ENCODE measurements at regions of chr4 and their contacts with region 1.

Region 1: GRCh38 chr4:78517050-78517652 is 34.4 kb upstream of the ANXA3 start:
- DNase-seq: no peak
- H3K4me3 ChIP-seq: no peak overlapping the region
- H3K27ac ChIP-seq: no peak overlapping the region
- H3K4me1 ChIP-seq: no peaks in the 10 kb centered on the region
- H3K27me3 ChIP-seq: no peaks in the 10 kb centered on the region
- CTCF ChIP-seq: peak; percentile 69

Region 2: GRCh38 chr4:77959566-77960338 is 557.4 kb before region 1 on chr4:
- CTCF ChIA-PET with region 1: no interaction called
- POLR2A ChIA-PET with region 1: no interaction called
- intact Hi-C with region 1: loop called (anchors 1 kb)
- DNase-seq: no peak
- H3K4me3 ChIP-seq: no peak overlapping the region
- H3K27ac ChIP-seq: no peak overlapping the region
- H3K4me1 ChIP-seq: no peaks in the 10 kb centered on the region
- H3K27me3 ChIP-seq: no peaks in the 10 kb centered on the region
- CTCF ChIP-seq: peak; percentile 76

Region 3: DNA sequence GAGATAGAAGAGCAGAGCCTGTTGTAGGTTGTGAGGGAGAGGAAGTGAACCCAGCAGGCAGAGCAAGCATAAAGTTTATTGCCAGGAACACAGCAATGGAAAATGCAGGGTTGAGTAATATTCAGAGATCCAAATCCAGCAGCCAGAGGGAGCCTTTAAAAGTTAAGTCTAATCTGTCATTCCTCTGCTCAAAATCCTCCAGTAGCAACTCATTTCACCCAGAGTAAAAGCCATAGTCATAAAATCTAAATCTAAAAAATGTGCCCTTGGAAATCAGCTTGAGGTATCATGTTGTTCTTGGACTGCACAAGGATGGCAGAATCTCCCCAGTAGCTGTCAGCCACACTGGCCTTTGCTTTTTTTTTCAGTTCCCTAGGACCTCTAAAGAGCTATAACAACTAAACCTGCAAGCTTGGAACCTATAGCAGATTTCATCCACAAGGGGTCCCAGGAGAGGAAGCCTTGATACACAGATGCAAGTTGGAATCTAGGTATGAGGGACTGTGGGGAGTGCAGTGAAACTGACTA is 522.9 kb before region 1 on chr4:
- CTCF ChIA-PET with region 1: no interaction called
- POLR2A ChIA-PET with region 1: no interaction called
- intact Hi-C with region 1: loop called (anchors 1 kb)
- DNase-seq: peak in 1 of 2 experiments; percentile 16
- H3K4me3 ChIP-seq: no peak overlapping the region
- H3K27ac ChIP-seq: no peak overlapping the region
- H3K4me1 ChIP-seq: no peaks in the 10 kb centered on the region
- H3K27me3 ChIP-seq: no peaks in the 10 kb centered on the region
- CTCF ChIP-seq: peak; percentile 66

Region 4: DNA sequence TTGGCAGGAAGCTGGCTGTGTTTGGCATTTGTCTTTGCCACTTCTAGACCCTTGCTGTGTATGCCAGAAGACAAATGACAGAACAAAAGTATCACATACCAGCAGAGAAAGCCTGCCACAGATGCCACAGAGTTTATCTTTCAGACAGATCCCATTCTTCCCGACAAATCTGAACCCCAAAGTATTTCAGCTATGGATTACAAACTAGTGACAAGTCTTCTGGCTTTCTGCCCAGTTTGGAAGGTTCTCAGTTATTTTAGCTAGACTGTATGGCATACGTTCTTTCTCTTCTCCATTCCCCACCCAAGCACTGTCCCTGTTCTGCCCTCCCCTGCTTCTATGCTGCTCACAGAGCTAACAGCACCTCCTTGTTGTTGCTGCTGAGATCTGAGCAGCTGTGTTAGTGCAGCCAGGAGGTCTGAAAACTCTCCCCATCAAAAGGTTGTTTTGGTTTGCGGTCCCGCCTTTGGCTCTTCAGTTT is 223.3 kb before region 1 on chr4:
- CTCF ChIA-PET with region 1: interaction called, 7 read pairs
- POLR2A ChIA-PET with region 1: no interaction called
- intact Hi-C with region 1: loop called (anchors 5 kb)
- DNase-seq: peak; percentile 63 to 67
- H3K4me3 ChIP-seq: no peak overlapping the region
- H3K27ac ChIP-seq: peak overlapping the region; percentile 58
- H3K4me1 ChIP-seq: peaks cover 30% of the 10 kb centered on the region
- H3K27me3 ChIP-seq: no peaks in the 10 kb centered on the region
- CTCF ChIP-seq: no peak

Region 5: GRCh38 chr4:78481180-78481579 is 36.0 kb before region 1 on chr4:
- CTCF ChIA-PET with region 1: no interaction called
- POLR2A ChIA-PET with region 1: no interaction called
- intact Hi-C with region 1: no loop called
- DNase-seq: no peak
- H3K4me3 ChIP-seq: no peak overlapping the region
- H3K27ac ChIP-seq: no peak overlapping the region
- H3K4me1 ChIP-seq: no peaks in the 10 kb centered on the region
- H3K27me3 ChIP-seq: no peaks in the 10 kb centered on the region
- CTCF ChIP-seq: no peak

Region 6: DNA sequence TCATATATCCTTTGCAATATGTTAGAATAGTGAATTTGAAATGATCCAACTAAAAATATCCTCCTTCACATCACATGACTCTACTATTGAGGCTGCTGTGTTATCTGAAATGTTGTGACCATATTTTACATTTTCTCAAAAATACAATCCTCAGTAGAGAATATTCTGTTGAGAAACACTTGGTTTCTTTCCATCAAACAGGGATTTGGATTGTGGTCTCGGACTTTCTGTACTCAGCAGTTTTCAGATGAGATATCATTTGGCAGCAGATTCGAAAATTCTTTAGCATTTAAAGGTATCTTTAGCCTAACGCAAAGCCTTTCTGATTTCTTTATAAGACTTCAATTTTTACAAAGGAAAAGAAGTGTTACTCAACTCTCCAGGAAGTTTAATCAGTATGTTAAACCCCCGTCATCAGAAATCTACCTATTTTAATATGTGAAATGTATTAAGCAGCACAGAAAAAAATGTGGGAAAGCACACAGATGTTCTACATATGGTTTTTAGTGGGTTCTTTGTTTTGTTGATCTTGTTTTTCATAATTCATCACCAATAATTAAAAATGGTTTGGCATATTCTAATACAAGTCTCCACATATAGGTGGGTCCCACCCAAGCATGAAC is 21.0 kb before region 1 on chr4:
- CTCF ChIA-PET with region 1: no interaction called
- POLR2A ChIA-PET with region 1: no interaction called
- intact Hi-C with region 1: no loop called
- DNase-seq: no peak
- H3K4me3 ChIP-seq: no peak overlapping the region
- H3K27ac ChIP-seq: no peak overlapping the region
- H3K4me1 ChIP-seq: no peaks in the 10 kb centered on the region
- H3K27me3 ChIP-seq: no peaks in the 10 kb centered on the region
- CTCF ChIP-seq: no peak

Region 7: DNA sequence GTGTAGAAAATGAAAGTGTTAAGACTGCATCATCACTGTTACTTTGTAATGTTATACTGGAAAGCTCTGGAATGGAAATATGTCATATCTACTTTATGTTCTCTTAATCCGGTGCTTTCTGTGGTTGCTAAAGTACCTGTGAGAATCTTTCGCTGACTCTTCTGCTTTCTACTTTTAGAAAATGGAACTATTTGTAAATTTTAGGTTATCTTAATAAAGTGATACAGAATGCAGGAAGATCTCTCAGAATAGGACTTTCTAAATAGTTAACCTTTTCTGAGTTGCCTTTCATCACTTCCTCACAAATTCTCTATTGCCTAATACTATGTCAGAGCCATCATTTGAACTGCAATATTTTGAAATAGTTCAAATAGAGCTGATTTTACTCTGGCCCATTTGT is 328.3 kb after region 1 on chr4:
- CTCF ChIA-PET with region 1: no interaction called
- POLR2A ChIA-PET with region 1: interaction called, 12 read pairs
- intact Hi-C with region 1: no loop called
- DNase-seq: no peak
- H3K4me3 ChIP-seq: no peak overlapping the region
- H3K27ac ChIP-seq: no peak overlapping the region
- H3K4me1 ChIP-seq: no peaks in the 10 kb centered on the region
- H3K27me3 ChIP-seq: no peaks in the 10 kb centered on the region
- CTCF ChIP-seq: no peak

Measured in PC-9 (cell line).